Aorta (tissue), 5 donors: ENCODE measurements at regions of chr9 and their contacts with region 1.

Region 1: DNA sequence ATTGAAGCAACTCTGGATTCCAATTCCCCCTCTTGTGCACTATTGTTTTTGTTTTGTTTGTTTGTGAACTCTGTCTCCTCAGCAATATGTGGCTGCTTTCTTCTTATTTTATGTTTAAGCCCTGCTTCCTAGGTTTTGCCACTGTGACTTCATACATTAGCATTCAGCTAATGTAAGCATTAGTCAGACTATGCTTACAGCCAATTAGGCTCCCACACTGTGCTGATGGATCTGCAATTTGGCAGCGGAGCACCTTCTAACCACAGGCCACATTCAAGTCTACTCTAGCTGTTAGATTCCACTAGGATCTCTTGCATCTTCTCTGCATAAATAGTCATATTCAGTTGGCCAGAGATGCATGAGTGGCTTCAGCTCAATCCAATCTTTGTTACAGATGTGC is 9.6 kb upstream of the BICD2 start:
- DNase-seq: no peak
- ATAC-seq: no peak
- H3K4me3 ChIP-seq: no peak overlapping the region
- H3K27ac ChIP-seq: no peak overlapping the region
- H3K4me1 ChIP-seq: no peaks in the 10 kb centered on the region
- H3K27me3 ChIP-seq: peaks cover 0 to 3% of the 10 kb centered on the region in 2 donors

Region 2: DNA sequence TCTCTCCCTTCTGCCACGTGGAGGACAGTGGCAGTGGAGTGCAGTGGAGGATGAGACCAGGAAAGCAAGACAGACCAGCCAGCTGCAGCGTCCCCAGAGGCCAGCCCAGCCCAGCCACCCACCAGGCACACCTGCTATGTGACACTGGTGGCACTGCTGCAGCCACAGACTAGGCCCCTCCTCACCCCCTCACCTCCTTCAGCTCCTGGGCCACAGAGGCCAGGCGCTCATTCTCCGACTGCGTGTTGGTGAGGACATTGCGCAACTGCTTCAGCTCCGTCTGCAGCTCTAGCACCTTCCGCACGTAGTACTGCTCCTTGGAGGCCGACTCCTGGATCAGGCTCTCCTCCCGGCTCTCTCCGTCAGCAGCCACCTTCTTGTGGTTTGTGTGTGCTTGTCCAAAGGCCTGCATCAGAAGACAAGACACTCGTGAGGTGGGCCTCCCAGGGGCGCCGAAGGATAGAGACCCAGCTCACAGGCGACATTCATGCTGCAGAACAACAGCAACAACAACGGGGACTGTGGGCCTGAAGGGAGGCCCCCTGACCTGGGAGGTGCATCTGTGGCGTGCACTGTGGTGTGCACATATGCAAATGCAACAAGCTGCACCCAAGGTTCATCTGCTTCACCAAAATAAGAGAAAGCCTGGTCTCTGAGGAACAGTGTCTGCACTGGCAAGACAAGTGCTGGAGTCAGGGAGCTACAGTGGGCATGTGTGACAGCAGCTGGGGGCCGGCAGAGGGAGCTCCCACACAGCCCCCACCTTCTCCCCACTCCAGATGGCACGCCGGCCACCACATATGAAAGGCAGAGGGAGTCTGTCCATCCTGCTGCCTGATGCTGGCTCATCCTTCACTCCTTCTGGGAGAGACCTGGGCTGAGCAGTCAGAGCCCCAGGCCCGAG is 45.2 kb before region 1 on chr9:
- intact Hi-C with region 1: loop called in 1 of 2 experiments (anchors 2 kb)
- DNase-seq: peak; percentile 52 to 66
- ATAC-seq: no peak
- H3K4me3 ChIP-seq: no peak overlapping the region
- H3K27ac ChIP-seq: no peak overlapping the region
- H3K4me1 ChIP-seq: no peaks in the 10 kb centered on the region
- H3K27me3 ChIP-seq: no peaks in the 10 kb centered on the region

Region 3: DNA sequence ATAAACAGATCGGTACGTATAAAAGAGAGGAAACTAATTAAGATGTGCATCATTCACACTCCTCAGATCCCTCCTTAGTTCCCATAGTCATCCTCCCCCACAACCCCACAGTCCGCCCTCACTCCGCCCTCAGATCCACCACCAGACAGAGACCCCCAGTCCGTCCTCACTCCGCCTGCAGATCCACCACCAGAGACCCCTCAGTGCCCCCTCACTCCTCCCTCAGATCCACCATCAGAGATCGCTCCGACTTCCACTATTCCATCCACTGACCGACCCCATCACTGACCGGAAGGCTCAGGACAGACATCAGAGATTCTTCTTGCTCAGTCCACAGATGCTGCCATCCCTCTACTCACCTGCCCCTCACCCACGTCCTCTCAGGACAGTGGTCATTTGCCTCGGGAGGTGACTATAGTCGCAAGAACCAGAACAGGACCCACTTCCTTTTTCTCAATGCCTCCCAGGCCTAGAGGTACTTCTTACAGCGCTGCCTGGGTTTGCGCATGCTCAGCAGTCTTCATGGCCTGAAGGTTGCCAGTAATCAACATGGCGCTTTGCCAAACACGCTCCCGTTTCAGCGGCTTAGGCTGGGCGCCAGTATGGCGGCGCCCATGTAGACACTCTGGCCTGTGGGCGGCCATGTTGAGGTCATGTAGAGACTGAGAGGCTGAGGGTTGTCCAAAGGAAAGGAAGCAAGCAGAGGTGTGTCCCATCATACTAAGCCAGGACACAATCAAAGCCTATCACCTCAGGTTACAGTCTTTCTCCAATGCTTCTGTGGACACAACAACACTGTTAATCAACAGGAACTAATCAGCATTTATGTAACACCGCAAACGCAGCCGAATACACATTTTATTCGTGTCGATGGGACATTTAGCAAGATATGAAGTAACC is 103.5 kb after region 1 on chr9 and contains the start of gene ZNF484:
- intact Hi-C with region 1: no loop called
- DNase-seq: peak; percentile 98
- ATAC-seq: peak; percentile 100
- H3K4me3 ChIP-seq: peak within 1 kb of the TSS; percentile 27 to 89
- H3K27ac ChIP-seq: peak within 1 kb of the TSS in 1 of 2 donors; percentile 86
- H3K4me1 ChIP-seq: no peaks in the 10 kb centered on the region
- H3K27me3 ChIP-seq: no peaks in the 10 kb centered on the region
- total RNA-seq, gene ZNF484: 11.6 to 17.3 TPM